ENCODE measurements at regions of chr12 and their contacts with region 1.

Region 1: DNA sequence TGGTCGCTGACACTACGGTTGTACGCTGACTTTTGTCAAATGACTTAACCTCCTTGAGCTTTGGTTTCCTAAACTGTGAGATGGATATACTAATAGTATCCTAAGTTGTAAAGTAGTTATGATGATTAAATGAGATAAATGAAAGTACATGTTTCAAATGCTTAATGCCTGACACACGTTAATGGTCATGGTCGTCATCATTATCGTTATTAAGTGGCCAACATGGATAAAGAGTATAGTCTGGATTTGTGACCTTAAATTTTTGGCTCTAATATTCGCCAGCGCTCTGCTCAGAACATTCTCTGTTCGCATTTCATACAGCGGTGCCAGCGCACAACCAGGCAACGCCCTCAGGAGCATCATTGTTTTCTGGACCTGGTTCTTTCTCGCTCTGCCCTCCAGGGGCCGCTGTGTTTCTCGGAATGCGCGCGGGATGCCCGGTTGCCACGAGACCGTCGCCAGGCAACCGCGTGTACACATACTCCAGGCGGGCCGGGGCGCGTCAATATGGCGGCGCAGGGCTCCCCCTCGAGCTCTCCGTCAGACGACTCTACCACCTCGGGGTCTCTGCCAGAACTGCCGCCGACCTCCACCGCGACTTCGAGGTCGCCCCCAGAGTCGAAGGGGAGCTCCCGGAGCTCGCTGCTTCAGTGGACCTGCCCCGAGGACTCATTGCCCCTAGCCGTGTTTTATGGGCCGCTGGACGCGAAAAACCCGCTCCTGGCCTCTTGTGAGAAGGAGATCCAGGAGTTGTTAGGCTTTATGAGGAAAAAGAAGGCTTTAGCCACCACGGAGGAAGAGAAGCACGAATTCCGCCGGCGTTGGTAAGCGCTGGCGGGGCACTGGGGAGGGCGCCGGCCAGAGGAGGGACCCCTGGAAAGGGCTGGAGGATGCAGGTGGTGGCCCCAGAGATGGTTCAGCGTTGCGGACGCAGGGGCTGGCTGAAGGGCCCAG is at the start of gene CFAP54:
- DNase-seq: peak; percentile 93
- H3K4me3 ChIP-seq: peak within 1 kb of the TSS; percentile 79 to 86
- H3K27ac ChIP-seq: peak within 1 kb of the TSS in 1 of 2 experiments; percentile 93; a peak in 3 of 4 replicates
- H3K4me1 ChIP-seq: peaks cover 2 to 12% of the 10 kb centered on the region in 2 experiments; a peak in 2 of 4 replicates
- H3K27me3 ChIP-seq: no peaks in the 10 kb centered on the region
- CTCF ChIP-seq: peak; percentile 85
- EP300 ChIP-seq: no peak
- RAD21 ChIP-seq: peak; percentile 69
- polyA plus RNA-seq, gene CFAP54: 0.87 and 1.1 TPM in 2 replicates

Region 2: GRCh38 chr12:96225044-96225855 is 264.1 kb before region 1 on chr12:
- CTCF ChIA-PET with region 1: no interaction called
- POLR2A ChIA-PET with region 1: no interaction called
- DNase-seq: peak; percentile 43
- H3K4me3 ChIP-seq: no peak overlapping the region
- H3K27ac ChIP-seq: peak overlapping the region in 1 of 2 experiments; percentile 39; a peak in 2 of 4 replicates
- H3K4me1 ChIP-seq: peaks cover 12 to 14% of the 10 kb centered on the region in 2 experiments
- H3K27me3 ChIP-seq: no peaks in the 10 kb centered on the region
- CTCF ChIP-seq: no peak
- EP300 ChIP-seq: no peak
- RAD21 ChIP-seq: no peak

Region 3: GRCh38 chr12:96399919-96400797 is 89.2 kb before region 1 on chr12 and contains the start of gene CDK17:
- CTCF ChIA-PET with region 1: interaction called, 14 read pairs
- POLR2A ChIA-PET with region 1: no interaction called
- DNase-seq: peak; percentile 97
- H3K4me3 ChIP-seq: peak within 1 kb of the TSS; percentile 88 to 90
- H3K27ac ChIP-seq: peak within 1 kb of the TSS; percentile 93 to 97
- H3K4me1 ChIP-seq: peaks cover 2 to 15% of the 10 kb centered on the region in 2 experiments; a peak in 2 of 4 replicates
- H3K27me3 ChIP-seq: no peaks in the 10 kb centered on the region
- CTCF ChIP-seq: peak; percentile 39
- EP300 ChIP-seq: 0 out of 4 replicates have a peak, but pooled peaks of 1 of the 2 experiments have one; percentile 31
- RAD21 ChIP-seq: peak; percentile 44
- polyA plus RNA-seq, gene CDK17: 11.7 and 12.4 TPM in 2 replicates

Measured in SK-N-SH (cell line).